Activated T-helper 1 cell treated with anti-CD3 and anti-CD28 coated beads, Interleukin-12 subunit alpha, Interleukin-12 subunit beta, Interleukin-2, Interleukin-4 antibody, amounts not matched to agents 30 ng/mL and 10 ng/mL and 1 ng/mL, durations not matched to agents 14 hours and 24 hours and 36 hours (primary cell): ENCODE measurements at regions of chr13 and their contacts with region 1.

Region 1: GRCh38 chr13:99442273-99442895 is 58.9 kb upstream of the TM9SF2 start:
- DNase-seq: peak; percentile 49
- H3K4me3 Mint-ChIP-seq: no peak overlapping the region
- H3K27ac Mint-ChIP-seq: no peak overlapping the region
- H3K4me1 Mint-ChIP-seq: peaks cover 6% of the 10 kb centered on the region
- H3K27me3 Mint-ChIP-seq: peaks cover 34% of the 10 kb centered on the region

Region 2: GRCh38 chr13:99606324-99607066 is 164.1 kb after region 1 on chr13:
- intact Hi-C with region 1: loop called (anchors 1 kb)
- DNase-seq: peak; percentile 82
- H3K4me3 Mint-ChIP-seq: peak within 1 kb of the TSS; percentile 89
- H3K27ac Mint-ChIP-seq: peak within 1 kb of the TSS; percentile 81
- H3K4me1 Mint-ChIP-seq: peaks cover 29% of the 10 kb centered on the region
- H3K27me3 Mint-ChIP-seq: peaks cover 4% of the 10 kb centered on the region

Region 3: GRCh38 chr13:99614385-99614885 is 172.1 kb after region 1 on chr13:
- intact Hi-C with region 1: loop called (anchors 1 kb)
- DNase-seq: no peak
- H3K4me3 Mint-ChIP-seq: no peak overlapping the region
- H3K27ac Mint-ChIP-seq: no peak overlapping the region
- H3K4me1 Mint-ChIP-seq: peaks cover 5% of the 10 kb centered on the region
- H3K27me3 Mint-ChIP-seq: no peaks in the 10 kb centered on the region

Region 4: DNA sequence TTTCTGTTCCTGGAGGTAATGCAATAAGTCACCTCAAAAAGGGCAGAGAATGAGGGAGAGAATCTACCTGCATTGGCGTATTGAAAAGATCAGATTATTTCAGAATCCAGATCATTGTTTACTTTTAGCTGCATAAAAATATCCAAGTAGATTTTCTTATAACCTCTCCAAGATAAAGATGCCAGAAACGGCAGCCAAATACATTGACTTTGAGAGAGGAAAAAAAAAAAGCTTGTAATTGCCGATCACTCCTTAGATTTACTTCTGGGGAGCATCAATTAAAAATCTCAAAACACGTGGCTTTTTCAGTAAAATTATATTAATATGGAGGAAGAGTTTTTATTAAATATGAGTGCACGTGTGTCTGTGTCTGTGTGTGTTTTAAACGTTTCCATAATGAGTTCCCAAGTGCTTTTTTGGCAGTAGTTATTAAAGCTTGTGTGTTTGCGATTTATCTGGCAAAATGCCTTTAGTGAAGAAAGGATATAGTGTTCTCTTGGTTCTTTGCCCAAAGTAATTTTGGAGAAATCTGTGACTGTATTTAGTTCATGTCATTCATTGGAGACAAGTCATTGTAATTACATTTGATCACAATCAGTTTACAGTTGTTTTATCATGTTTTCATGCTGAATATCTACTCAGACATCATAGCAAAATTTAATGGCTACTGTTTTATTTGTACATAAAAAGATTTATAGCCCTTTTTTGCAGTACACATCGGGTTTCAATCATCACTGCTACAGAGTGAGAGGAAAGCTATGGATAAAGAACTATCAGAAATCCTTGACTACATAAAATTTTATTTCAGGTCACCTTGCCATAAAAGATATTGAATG is 234.9 kb after region 1 on chr13:
- intact Hi-C with region 1: no loop called
- DNase-seq: no peak
- H3K4me3 Mint-ChIP-seq: no peak overlapping the region
- H3K27ac Mint-ChIP-seq: no peak overlapping the region
- H3K4me1 Mint-ChIP-seq: no peaks in the 10 kb centered on the region
- H3K27me3 Mint-ChIP-seq: peaks cover 8% of the 10 kb centered on the region

Region 5: GRCh38 chr13:99916366-99917103 is 474.2 kb after region 1 on chr13:
- intact Hi-C with region 1: no loop called
- DNase-seq: peak; percentile 12
- H3K4me3 Mint-ChIP-seq: no peak overlapping the region
- H3K27ac Mint-ChIP-seq: no peak overlapping the region
- H3K4me1 Mint-ChIP-seq: peaks cover 38% of the 10 kb centered on the region
- H3K27me3 Mint-ChIP-seq: peaks cover 8% of the 10 kb centered on the region